Heart right ventricle (tissue), 16 donors: ENCODE measurements at regions of chrX and their contacts with region 1.

Region 1: GRCh38 chrX:70089604-70090297 is 27.5 kb downstream of the OTUD6A start:
- DNase-seq: no peak
- ATAC-seq: no peak
- H3K4me3 ChIP-seq: no peak overlapping the region
- H3K27ac ChIP-seq: peak overlapping the region in 1 of 10 donors; percentile 37
- H3K4me1 ChIP-seq: peaks cover 0 to 19% (median 3%) of the 10 kb centered on the region in 9 donors
- H3K27me3 ChIP-seq: peaks cover 0 to 6% (median 0%) of the 10 kb centered on the region in 7 donors
- CTCF ChIP-seq: no peak

Region 2: DNA sequence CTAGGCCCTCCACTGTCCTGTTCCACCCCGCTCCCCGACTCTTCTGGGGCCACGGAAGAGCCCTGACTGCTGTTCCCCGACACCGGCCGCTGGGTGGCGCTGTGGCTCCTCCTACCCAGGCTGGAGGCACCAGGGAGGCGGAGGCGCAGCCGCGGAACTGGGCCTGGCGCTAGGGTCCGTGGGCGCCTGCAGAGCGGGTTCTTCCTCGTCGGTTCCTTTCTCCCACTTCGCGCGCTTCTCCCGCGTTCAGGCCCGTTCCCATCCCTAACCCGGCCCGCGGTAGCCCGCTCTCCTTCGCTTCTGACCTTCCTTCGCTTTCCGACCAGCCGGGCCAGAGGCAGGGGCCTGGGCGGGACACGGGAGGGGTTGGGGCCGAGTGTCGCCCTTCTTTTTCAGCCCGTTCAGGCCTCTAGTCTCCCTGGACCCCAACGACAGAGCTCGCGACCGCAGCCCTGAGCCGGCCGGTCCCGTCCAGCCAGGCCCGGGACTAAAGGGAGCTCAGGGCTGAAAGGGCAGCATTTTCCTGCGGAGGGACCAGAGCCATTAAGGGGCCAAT is 551.4 kb before region 1 on chrX:
- intact Hi-C with region 1: loop called in 1 of 10 experiments (anchors 5 kb)
- DNase-seq: peak; percentile 70 to 83
- ATAC-seq: peak; percentile 95 to 99 (median 96)
- H3K4me3 ChIP-seq: peak overlapping the region in 9 of 10 donors; percentile 27 to 59 (median 54)
- H3K27ac ChIP-seq: peak overlapping the region in 4 of 10 donors; percentile 52 to 71 (median 54)
- H3K4me1 ChIP-seq: peaks cover 0 to 17% (median 3%) of the 10 kb centered on the region in 9 donors
- H3K27me3 ChIP-seq: peaks cover 0 to 34% (median 0%) of the 10 kb centered on the region in 7 donors
- CTCF ChIP-seq: peak; percentile 60 to 83 (median 77)

Region 3: GRCh38 chrX:70042399-70043371 is 47.1 kb before region 1 on chrX:
- intact Hi-C with region 1: loop called in 2 of 10 experiments (anchors 5 to 10 kb)
- DNase-seq: no peak
- ATAC-seq: no peak
- H3K4me3 ChIP-seq: no peak overlapping the region
- H3K27ac ChIP-seq: no peak overlapping the region
- H3K4me1 ChIP-seq: peaks cover 0 to 6% (median 0%) of the 10 kb centered on the region in 9 donors
- H3K27me3 ChIP-seq: no peaks in the 10 kb centered on the region
- CTCF ChIP-seq: no peak

Region 4: GRCh38 chrX:70577442-70577841 is 487.7 kb after region 1 on chrX:
- intact Hi-C with region 1: no loop called
- DNase-seq: no peak
- ATAC-seq: no peak
- H3K4me3 ChIP-seq: no peak overlapping the region
- H3K27ac ChIP-seq: no peak overlapping the region
- H3K4me1 ChIP-seq: no peaks in the 10 kb centered on the region
- H3K27me3 ChIP-seq: peaks cover 0 to 18% (median 0%) of the 10 kb centered on the region in 7 donors
- CTCF ChIP-seq: no peak